CD4-positive, alpha-beta memory T cell (primary cell): ENCODE measurements at regions of chr3 and their contacts with region 1.

Region 1: GRCh38 chr3:138935848-138936740 is 10.8 kb downstream of the FOXL2 start:
- DNase-seq: peak; percentile 61 to 71 (median 63)
- H3K4me3 ChIP-seq: peak overlapping the region in 1 of 2 donors; percentile 38
- H3K4me3 Mint-ChIP-seq: peak overlapping the region; percentile 63 to 83 (median 76)
- H3K27ac ChIP-seq: no peak overlapping the region
- H3K27ac Mint-ChIP-seq: peak overlapping the region in 1 of 7 donors; percentile 52
- H3K4me1 ChIP-seq: peaks cover 45% of the 10 kb centered on the region
- H3K4me1 Mint-ChIP-seq: peaks cover 14 to 43% (median 28%) of the 10 kb centered on the region in 4 donors
- H3K27me3 ChIP-seq: peaks cover 47% of the 10 kb centered on the region
- H3K27me3 Mint-ChIP-seq: peaks cover 55 to 67% of the 10 kb centered on the region in 2 donors

Region 2: GRCh38 chr3:138323971-138324370 is 612.1 kb before region 1 on chr3:
- CTCF ChIA-PET with region 1: no interaction called
- POLR2A ChIA-PET with region 1: no interaction called
- intact Hi-C with region 1: no loop called
- DNase-seq: no peak
- H3K4me3 ChIP-seq: no peak overlapping the region
- H3K4me3 Mint-ChIP-seq: no peak overlapping the region
- H3K27ac ChIP-seq: no peak overlapping the region
- H3K27ac Mint-ChIP-seq: no peak overlapping the region
- H3K4me1 ChIP-seq: peaks cover 17% of the 10 kb centered on the region
- H3K4me1 Mint-ChIP-seq: peaks cover 17 to 41% (median 24%) of the 10 kb centered on the region in 4 donors
- H3K27me3 ChIP-seq: no peaks in the 10 kb centered on the region
- H3K27me3 Mint-ChIP-seq: peaks cover 0 to 1% of the 10 kb centered on the region in 2 donors

Region 3: GRCh38 chr3:138946181-138947059 is 10.3 kb after region 1 on chr3:
- CTCF ChIA-PET with region 1: interaction called, 14 read pairs
- POLR2A ChIA-PET with region 1: no interaction called
- intact Hi-C with region 1: loop called (anchors 1 kb)
- DNase-seq: peak in 1 of 5 donors; percentile 20
- H3K4me3 ChIP-seq: peak overlapping the region; percentile 23 to 45
- H3K4me3 Mint-ChIP-seq: peak overlapping the region; percentile 68 to 89 (median 76)
- H3K27ac ChIP-seq: no peak overlapping the region
- H3K27ac Mint-ChIP-seq: no peak overlapping the region
- H3K4me1 ChIP-seq: peaks cover 41% of the 10 kb centered on the region
- H3K4me1 Mint-ChIP-seq: peaks cover 28 to 64% (median 37%) of the 10 kb centered on the region in 4 donors
- H3K27me3 ChIP-seq: peaks cover 58% of the 10 kb centered on the region
- H3K27me3 Mint-ChIP-seq: peaks cover 65 to 74% of the 10 kb centered on the region in 2 donors

Region 4: GRCh38 chr3:138995706-138996105 is 59.6 kb after region 1 on chr3:
- CTCF ChIA-PET with region 1: no interaction called
- POLR2A ChIA-PET with region 1: no interaction called
- intact Hi-C with region 1: no loop called
- DNase-seq: no peak
- H3K4me3 ChIP-seq: no peak overlapping the region
- H3K4me3 Mint-ChIP-seq: no peak overlapping the region
- H3K27ac ChIP-seq: no peak overlapping the region
- H3K27ac Mint-ChIP-seq: no peak overlapping the region
- H3K4me1 ChIP-seq: no peaks in the 10 kb centered on the region
- H3K4me1 Mint-ChIP-seq: no peaks in the 10 kb centered on the region
- H3K27me3 ChIP-seq: no peaks in the 10 kb centered on the region
- H3K27me3 Mint-ChIP-seq: peaks cover 14 to 25% of the 10 kb centered on the region in 2 donors

Region 5: GRCh38 chr3:139329345-139329850 is 393.3 kb after region 1 on chr3:
- CTCF ChIA-PET with region 1: interaction called, 12 read pairs
- POLR2A ChIA-PET with region 1: no interaction called
- intact Hi-C with region 1: loop called (anchors 1 kb)
- DNase-seq: peak; percentile 79 to 82 (median 81)
- H3K4me3 ChIP-seq: peak overlapping the region in 1 of 2 donors; percentile 8
- H3K4me3 Mint-ChIP-seq: peak overlapping the region; percentile 66 to 84 (median 78)
- H3K27ac ChIP-seq: no peak overlapping the region
- H3K27ac Mint-ChIP-seq: no peak overlapping the region
- H3K4me1 ChIP-seq: peaks cover 5% of the 10 kb centered on the region
- H3K4me1 Mint-ChIP-seq: peaks cover 5 to 20% (median 12%) of the 10 kb centered on the region in 4 donors
- H3K27me3 ChIP-seq: peaks cover 4% of the 10 kb centered on the region
- H3K27me3 Mint-ChIP-seq: peaks cover 22 to 26% of the 10 kb centered on the region in 2 donors

Region 6: GRCh38 chr3:139343895-139344856 is 408.1 kb after region 1 on chr3 and contains the start of gene MRPS22:
- CTCF ChIA-PET with region 1: interaction called, 3 read pairs
- POLR2A ChIA-PET with region 1: no interaction called
- intact Hi-C with region 1: loop called (anchors 5 kb)
- DNase-seq: peak; percentile 84 to 90 (median 84)
- H3K4me3 ChIP-seq: peak within 1 kb of the TSS; percentile 66 to 95
- H3K4me3 Mint-ChIP-seq: peak within 1 kb of the TSS in 2 of 8 donors; percentile 67 to 71
- H3K27ac ChIP-seq: peak within 1 kb of the TSS; percentile 79
- H3K27ac Mint-ChIP-seq: peak within 1 kb of the TSS in 3 of 7 donors; percentile 78 to 89 (median 81)
- H3K4me1 ChIP-seq: peaks cover 24% of the 10 kb centered on the region
- H3K4me1 Mint-ChIP-seq: peaks cover 3 to 11% (median 7%) of the 10 kb centered on the region in 4 donors
- H3K27me3 ChIP-seq: peaks cover 4% of the 10 kb centered on the region
- H3K27me3 Mint-ChIP-seq: peaks cover 0 to 7% of the 10 kb centered on the region in 2 donors
- total RNA-seq, gene MRPS22: 33.4 to 36.9 TPM